ENCODE measurements at regions of chr5 and their contacts with region 1.

Region 1: GRCh38 chr5:161966564-161966963 is 101.0 kb upstream of the GABRG2 start:
- DNase-seq: no peak
- ATAC-seq: peak; percentile 78
- H3K4me3 Mint-ChIP-seq: no peak overlapping the region
- H3K27ac Mint-ChIP-seq: no peak overlapping the region
- H3K4me1 Mint-ChIP-seq: peaks cover 6% of the 10 kb centered on the region; the same call in 1 of the 2 replicates
- H3K27me3 Mint-ChIP-seq: no peaks in the 10 kb centered on the region
- CTCF ChIP-seq: no peak

Region 2: GRCh38 chr5:161790926-161791325 is 175.6 kb before region 1 on chr5:
- CTCF ChIA-PET with region 1: no interaction called
- POLR2A ChIA-PET with region 1: no interaction called
- DNase-seq: no peak
- ATAC-seq: no peak
- H3K4me3 Mint-ChIP-seq: no peak overlapping the region
- H3K27ac Mint-ChIP-seq: no peak overlapping the region
- H3K4me1 Mint-ChIP-seq: peaks cover 3% of the 10 kb centered on the region
- H3K27me3 Mint-ChIP-seq: no peaks in the 10 kb centered on the region
- CTCF ChIP-seq: no peak

Region 3: GRCh38 chr5:162209005-162209605 is 242.5 kb after region 1 on chr5:
- CTCF ChIA-PET with region 1: interaction called, 24 read pairs
- POLR2A ChIA-PET with region 1: no interaction called
- DNase-seq: peak; percentile 70
- ATAC-seq: peak; percentile 100
- H3K4me3 Mint-ChIP-seq: no peak overlapping the region
- H3K27ac Mint-ChIP-seq: no peak overlapping the region
- H3K4me1 Mint-ChIP-seq: no peaks in the 10 kb centered on the region
- H3K27me3 Mint-ChIP-seq: no peaks in the 10 kb centered on the region
- CTCF ChIP-seq: peak; percentile 34; the same call in 1 of the 2 replicates

Measured in WTC11 (cell line).